HCT116 (cell line): ENCODE measurements at regions of chr7 and their contacts with region 1.

Region 1: DNA sequence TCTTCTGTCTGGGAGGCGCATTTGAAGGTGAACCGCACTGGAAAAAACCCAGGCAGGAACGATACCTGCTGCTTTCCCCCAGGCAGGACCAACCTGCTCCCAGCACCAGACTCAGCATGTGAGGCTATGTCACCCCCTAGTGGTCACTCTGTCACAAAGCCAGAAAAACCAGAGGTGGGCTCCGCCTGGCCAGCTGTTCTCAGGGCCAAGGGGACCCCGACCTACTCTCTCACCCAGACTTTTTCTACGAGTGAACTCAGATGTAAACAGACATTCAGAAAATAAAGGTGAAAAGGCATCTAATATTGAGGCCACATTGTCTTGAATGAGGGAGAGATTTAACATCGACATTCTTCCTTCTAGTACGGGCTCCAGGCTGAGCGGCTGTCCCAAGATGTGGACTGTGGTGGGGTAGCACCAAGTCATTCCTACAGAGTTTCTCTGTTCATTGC is 117.3 kb downstream of the PRKAG2 start:
- DNase-seq: peak; percentile 57
- ATAC-seq: peak; percentile 73
- H3K4me3 ChIP-seq: no peak overlapping the region
- H3K27ac ChIP-seq: no peak overlapping the region
- H3K4me1 ChIP-seq: peaks cover 21 to 38% of the 10 kb centered on the region in 2 experiments
- H3K27me3 ChIP-seq: no peaks in the 10 kb centered on the region
- CTCF ChIP-seq: peak in 2 of 3 experiments; percentile 91 to 93; a peak in 4 of 6 replicates
- POLR2A ChIP-seq: no peak
- RAD21 ChIP-seq: no peak

Region 2: DNA sequence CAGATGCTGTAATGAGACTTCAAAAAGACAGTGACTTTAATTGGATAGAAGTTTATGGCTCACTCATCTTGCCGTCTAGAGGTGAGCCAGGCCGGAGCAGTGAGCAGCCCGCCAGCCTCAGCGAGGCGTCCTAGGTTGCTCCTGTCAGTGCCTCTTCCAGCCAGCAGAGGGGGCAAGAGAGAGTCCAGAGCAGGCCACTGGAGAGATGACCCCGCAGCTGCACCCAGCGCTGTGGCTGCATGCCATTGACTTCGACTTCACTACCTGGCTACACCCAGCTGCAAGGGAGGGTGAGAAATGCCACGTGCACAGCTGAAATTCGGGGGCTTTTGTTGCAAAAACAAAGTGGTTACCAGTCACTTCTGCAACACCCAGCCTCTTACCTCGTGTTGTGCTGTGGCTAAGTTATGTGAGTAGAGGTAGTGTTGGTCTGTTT is 391.5 kb before region 1 on chr7:
- CTCF ChIA-PET with region 1: interaction called, 3 read pairs
- POLR2A ChIA-PET with region 1: no interaction called
- RAD21 ChIA-PET with region 1: no interaction called
- intact Hi-C with region 1: loop called (anchors 1 kb)
- DNase-seq: peak; percentile 48
- ATAC-seq: peak; percentile 100
- H3K4me3 ChIP-seq: no peak overlapping the region
- H3K27ac ChIP-seq: no peak overlapping the region
- H3K4me1 ChIP-seq: peaks cover 2 to 11% of the 10 kb centered on the region in 2 experiments; a peak in 2 of 4 replicates
- H3K27me3 ChIP-seq: no peaks in the 10 kb centered on the region
- CTCF ChIP-seq: peak; percentile 93
- POLR2A ChIP-seq: no peak
- RAD21 ChIP-seq: peak; percentile 91

Region 3: GRCh38 chr7:151570366-151570915 is 189.2 kb before region 1 on chr7:
- CTCF ChIA-PET with region 1: interaction called, 3 read pairs
- POLR2A ChIA-PET with region 1: no interaction called
- RAD21 ChIA-PET with region 1: no interaction called
- intact Hi-C with region 1: loop called (anchors 1 kb)
- DNase-seq: peak; percentile 12
- ATAC-seq: no peak
- H3K4me3 ChIP-seq: no peak overlapping the region
- H3K27ac ChIP-seq: no peak overlapping the region
- H3K4me1 ChIP-seq: peaks cover 0 to 9% of the 10 kb centered on the region in 2 experiments; a peak in 1 of 4 replicates
- H3K27me3 ChIP-seq: no peaks in the 10 kb centered on the region
- CTCF ChIP-seq: peak; percentile 48 to 92 (median 66)
- POLR2A ChIP-seq: no peak
- RAD21 ChIP-seq: peak; percentile 92

Region 4: GRCh38 chr7:151782598-151783448 is 23.2 kb after region 1 on chr7:
- CTCF ChIA-PET with region 1: interaction called, 17 read pairs
- POLR2A ChIA-PET with region 1: no interaction called
- RAD21 ChIA-PET with region 1: no interaction called
- intact Hi-C with region 1: no loop called
- DNase-seq: peak; percentile 53
- ATAC-seq: peak; percentile 96
- H3K4me3 ChIP-seq: peak overlapping the region; percentile 40 to 54
- H3K27ac ChIP-seq: peak overlapping the region; percentile 62
- H3K4me1 ChIP-seq: peaks cover 7 to 13% of the 10 kb centered on the region in 2 experiments
- H3K27me3 ChIP-seq: no peaks in the 10 kb centered on the region
- CTCF ChIP-seq: peak; percentile 94 to 99 (median 95)
- POLR2A ChIP-seq: no peak
- RAD21 ChIP-seq: peak; percentile 88

Region 5: DNA sequence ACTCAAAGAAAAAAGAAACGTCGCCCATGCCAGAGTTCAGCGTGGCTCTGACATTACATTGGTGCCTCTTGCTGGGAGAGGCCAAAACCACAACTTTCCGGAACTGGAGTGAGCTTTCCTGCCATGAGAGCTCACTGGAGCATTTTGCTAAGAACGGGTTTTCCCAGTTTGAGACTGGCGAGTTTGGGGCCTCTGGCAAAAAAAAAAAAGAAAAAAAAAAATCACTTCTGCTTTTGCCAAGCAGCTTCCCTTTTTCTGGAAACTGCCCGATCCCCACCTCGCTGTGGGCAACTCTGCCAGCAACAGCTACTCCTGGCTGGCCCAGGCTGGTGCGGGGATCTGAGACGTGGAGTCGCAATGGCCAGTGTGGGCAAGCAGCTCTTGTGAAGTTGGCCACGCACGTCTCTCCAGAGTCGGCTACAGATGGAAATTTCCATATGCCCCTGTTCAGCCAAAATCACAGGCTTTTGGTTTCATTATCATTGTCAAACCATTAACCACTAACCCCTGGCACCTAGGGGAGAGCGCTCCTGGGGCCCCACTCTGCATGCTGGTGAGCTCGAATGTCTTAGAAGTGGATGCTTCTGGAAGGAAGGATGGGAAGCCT is 91.6 kb after region 1 on chr7:
- CTCF ChIA-PET with region 1: no interaction called
- POLR2A ChIA-PET with region 1: no interaction called
- RAD21 ChIA-PET with region 1: no interaction called
- intact Hi-C with region 1: no loop called
- DNase-seq: no peak
- ATAC-seq: no peak
- H3K4me3 ChIP-seq: no peak overlapping the region
- H3K27ac ChIP-seq: no peak overlapping the region
- H3K4me1 ChIP-seq: no peaks in the 10 kb centered on the region
- H3K27me3 ChIP-seq: no peaks in the 10 kb centered on the region
- CTCF ChIP-seq: no peak
- POLR2A ChIP-seq: no peak
- RAD21 ChIP-seq: no peak

Region 6: DNA sequence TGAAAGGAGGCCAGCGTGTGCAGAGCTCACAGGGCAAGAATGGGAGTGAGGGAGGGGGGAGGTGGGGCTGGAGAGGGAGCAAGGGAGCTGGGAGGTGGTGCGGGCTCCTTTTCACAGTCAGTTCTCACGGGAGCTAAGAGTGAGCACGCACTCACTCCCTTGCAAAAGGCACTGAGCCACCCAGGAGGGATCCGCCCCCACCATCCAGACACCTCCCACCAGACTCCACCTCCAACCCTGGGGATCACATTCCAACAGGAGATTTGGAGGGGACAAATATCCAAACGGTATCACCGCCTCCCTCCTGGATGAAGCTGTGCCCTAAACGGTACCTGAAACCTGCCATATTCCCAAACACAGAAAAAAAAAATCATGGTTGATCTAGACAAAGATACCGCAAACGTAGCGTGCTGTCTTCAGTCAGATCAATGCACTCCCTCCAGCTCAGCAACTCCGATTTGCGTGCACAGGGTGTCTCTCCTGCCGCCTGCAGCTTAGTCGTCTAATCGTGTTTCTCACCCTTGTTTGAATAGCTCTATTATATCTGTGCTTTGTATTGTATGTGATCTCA is 137.6 kb after region 1 on chr7:
- CTCF ChIA-PET with region 1: no interaction called
- POLR2A ChIA-PET with region 1: no interaction called
- RAD21 ChIA-PET with region 1: no interaction called
- intact Hi-C with region 1: no loop called
- DNase-seq: no peak
- ATAC-seq: peak; percentile 81
- H3K4me3 ChIP-seq: peak overlapping the region; percentile 15 to 41; a peak in 3 of 4 replicates
- H3K27ac ChIP-seq: no peak overlapping the region
- H3K4me1 ChIP-seq: peaks cover 0 to 20% of the 10 kb centered on the region in 2 experiments; a peak in 2 of 4 replicates
- H3K27me3 ChIP-seq: 0 out of 2 replicates have a peak, but pooled peaks cover 6% of the 10 kb centered on the region
- CTCF ChIP-seq: no peak
- POLR2A ChIP-seq: no peak
- RAD21 ChIP-seq: no peak